Naive thymus-derived CD4-positive, alpha-beta T cell (primary cell): ENCODE measurements at regions of chr1 and their contacts with region 1.

Region 1: GRCh38 chr1:89605692-89606091 is 27.2 kb upstream of the LRRC8C start:
- DNase-seq: no peak
- ATAC-seq: no peak
- H3K4me3 ChIP-seq: peak overlapping the region; percentile 17
- H3K4me3 Mint-ChIP-seq: peak overlapping the region in 8 of 10 donors; percentile 52 to 96 (median 88)
- H3K27ac ChIP-seq: peak overlapping the region; percentile 92
- H3K27ac Mint-ChIP-seq: peak overlapping the region; percentile 97 to 100 (median 99)
- H3K4me1 ChIP-seq: peaks cover 82 to 85% of the 10 kb centered on the region in 2 donors
- H3K4me1 Mint-ChIP-seq: peaks cover 44 to 96% (median 93%) of the 10 kb centered on the region in 7 donors
- H3K27me3 ChIP-seq: no peaks in the 10 kb centered on the region
- H3K27me3 Mint-ChIP-seq: no peaks in the 10 kb centered on the region

Region 2: GRCh38 chr1:87636198-87636892 is 1969.3 kb before region 1 on chr1:
- CTCF ChIA-PET with region 1: no interaction called
- POLR2A ChIA-PET with region 1: no interaction called
- intact Hi-C with region 1: no loop called
- DNase-seq: no peak
- ATAC-seq: no peak
- H3K4me3 ChIP-seq: no peak overlapping the region
- H3K4me3 Mint-ChIP-seq: no peak overlapping the region
- H3K27ac ChIP-seq: no peak overlapping the region
- H3K27ac Mint-ChIP-seq: no peak overlapping the region
- H3K4me1 ChIP-seq: no peaks in the 10 kb centered on the region
- H3K4me1 Mint-ChIP-seq: no peaks in the 10 kb centered on the region
- H3K27me3 ChIP-seq: no peaks in the 10 kb centered on the region
- H3K27me3 Mint-ChIP-seq: peaks cover 0 to 12% (median 0%) of the 10 kb centered on the region in 5 donors

Region 3: DNA sequence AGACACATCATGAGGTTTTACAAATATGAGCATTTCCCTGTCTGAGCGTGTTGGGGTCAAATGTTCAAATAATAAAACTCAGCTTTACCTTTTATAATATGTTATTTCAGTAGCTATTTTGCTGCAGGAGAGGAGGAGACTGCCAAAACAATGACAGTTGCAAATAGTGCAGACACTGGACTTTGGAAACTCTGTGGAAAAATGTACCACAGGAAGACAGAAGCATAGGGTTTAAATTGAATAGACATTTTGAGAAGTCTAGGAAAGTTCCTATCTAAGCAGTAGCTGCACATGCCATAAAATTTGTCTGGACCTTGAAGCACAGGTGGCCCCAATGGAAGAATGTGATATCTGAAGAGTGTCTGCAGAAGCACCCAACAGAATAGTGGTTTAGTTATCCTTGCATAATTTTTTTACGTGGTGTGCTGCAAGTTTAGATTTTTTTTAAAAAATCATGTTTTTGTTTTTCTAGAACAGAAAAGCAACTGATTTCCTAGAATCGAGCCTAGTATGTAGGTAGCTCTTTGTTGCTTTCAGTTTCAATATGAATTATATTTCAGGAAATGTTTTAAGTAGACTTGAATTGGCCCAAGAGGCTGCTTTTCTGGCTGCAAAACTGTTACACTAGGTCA is 319.0 kb before region 1 on chr1:
- CTCF ChIA-PET with region 1: no interaction called
- POLR2A ChIA-PET with region 1: no interaction called
- intact Hi-C with region 1: loop called in 1 of 2 experiments (anchors 5 kb)
- DNase-seq: peak in 6 of 9 donors; percentile 25 to 65 (median 48)
- ATAC-seq: peak; percentile 77
- H3K4me3 ChIP-seq: peak overlapping the region; percentile 41
- H3K4me3 Mint-ChIP-seq: peak overlapping the region; percentile 63 to 83 (median 76)
- H3K27ac ChIP-seq: peak overlapping the region; percentile 63
- H3K27ac Mint-ChIP-seq: peak overlapping the region; percentile 76 to 96 (median 91)
- H3K4me1 ChIP-seq: peaks cover 40 to 52% of the 10 kb centered on the region in 2 donors
- H3K4me1 Mint-ChIP-seq: peaks cover 48 to 78% (median 74%) of the 10 kb centered on the region in 7 donors
- H3K27me3 ChIP-seq: no peaks in the 10 kb centered on the region
- H3K27me3 Mint-ChIP-seq: no peaks in the 10 kb centered on the region

Region 4: GRCh38 chr1:89545264-89546038 is 60.2 kb before region 1 on chr1:
- CTCF ChIA-PET with region 1: no interaction called
- POLR2A ChIA-PET with region 1: interaction called, 5 read pairs
- intact Hi-C with region 1: loop called in 1 of 2 experiments (anchors 2 kb)
- DNase-seq: peak in 3 of 9 donors; percentile 4 to 58 (median 49)
- ATAC-seq: peak; percentile 32
- H3K4me3 ChIP-seq: no peak overlapping the region
- H3K4me3 Mint-ChIP-seq: peak overlapping the region in 8 of 10 donors; percentile 3 to 68 (median 28)
- H3K27ac ChIP-seq: no peak overlapping the region
- H3K27ac Mint-ChIP-seq: peak overlapping the region in 4 of 9 donors; percentile 1 to 78 (median 32)
- H3K4me1 ChIP-seq: peaks cover 0 to 18% of the 10 kb centered on the region in 2 donors
- H3K4me1 Mint-ChIP-seq: peaks cover 37 to 87% (median 66%) of the 10 kb centered on the region in 7 donors
- H3K27me3 ChIP-seq: no peaks in the 10 kb centered on the region
- H3K27me3 Mint-ChIP-seq: no peaks in the 10 kb centered on the region

Region 5: GRCh38 chr1:89615676-89616598 is 10.2 kb after region 1 on chr1:
- CTCF ChIA-PET with region 1: interaction called, 13 read pairs
- POLR2A ChIA-PET with region 1: interaction called, 834 read pairs
- intact Hi-C with region 1: no loop called
- DNase-seq: no peak
- ATAC-seq: peak; percentile 54
- H3K4me3 ChIP-seq: no peak overlapping the region
- H3K4me3 Mint-ChIP-seq: peak overlapping the region in 2 of 10 donors; percentile 23 to 24
- H3K27ac ChIP-seq: no peak overlapping the region
- H3K27ac Mint-ChIP-seq: peak overlapping the region in 8 of 9 donors; percentile 15 to 86 (median 74)
- H3K4me1 ChIP-seq: peaks cover 30 to 42% of the 10 kb centered on the region in 2 donors
- H3K4me1 Mint-ChIP-seq: peaks cover 38 to 95% (median 84%) of the 10 kb centered on the region in 7 donors
- H3K27me3 ChIP-seq: no peaks in the 10 kb centered on the region
- H3K27me3 Mint-ChIP-seq: no peaks in the 10 kb centered on the region

Region 6: GRCh38 chr1:89657886-89658285 is 52.2 kb after region 1 on chr1:
- CTCF ChIA-PET with region 1: interaction called, 3 read pairs
- POLR2A ChIA-PET with region 1: interaction called, 25 read pairs
- intact Hi-C with region 1: no loop called
- DNase-seq: peak in 7 of 9 donors; percentile 46 to 80 (median 68)
- ATAC-seq: peak; percentile 86
- H3K4me3 ChIP-seq: peak overlapping the region; percentile 18
- H3K4me3 Mint-ChIP-seq: peak overlapping the region; percentile 36 to 78 (median 66)
- H3K27ac ChIP-seq: peak overlapping the region; percentile 50
- H3K27ac Mint-ChIP-seq: peak overlapping the region; percentile 79 to 91 (median 84)
- H3K4me1 ChIP-seq: peaks cover 65 to 94% of the 10 kb centered on the region in 2 donors
- H3K4me1 Mint-ChIP-seq: peaks cover 47 to 94% (median 89%) of the 10 kb centered on the region in 7 donors
- H3K27me3 ChIP-seq: no peaks in the 10 kb centered on the region
- H3K27me3 Mint-ChIP-seq: no peaks in the 10 kb centered on the region

Region 7: DNA sequence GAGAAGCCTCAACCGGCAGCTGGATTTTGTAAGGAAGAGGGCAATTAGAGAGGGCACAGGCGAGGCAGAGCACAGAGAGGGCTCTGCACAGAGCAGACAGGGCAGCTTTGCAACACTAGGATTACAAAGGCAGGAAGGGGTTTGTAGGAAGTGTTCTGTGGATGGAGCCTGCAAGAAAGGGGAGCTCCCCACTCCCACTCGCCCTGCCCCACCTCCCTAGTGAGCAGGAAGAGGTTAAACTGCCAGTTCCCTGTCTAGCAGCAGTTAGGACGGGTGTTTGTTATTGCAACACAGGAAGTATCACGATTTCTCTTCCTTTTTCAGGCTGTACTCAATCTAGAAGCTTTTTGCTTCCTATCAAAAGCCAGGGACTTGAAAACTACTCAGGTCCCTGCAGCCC is 151.8 kb after region 1 on chr1:
- CTCF ChIA-PET with region 1: interaction called, 34 read pairs
- POLR2A ChIA-PET with region 1: interaction called, 81 read pairs
- intact Hi-C with region 1: loop called in 1 of 2 experiments (anchors 2 kb)
- DNase-seq: peak in 8 of 9 donors; percentile 30 to 59 (median 51)
- ATAC-seq: peak; percentile 68
- H3K4me3 ChIP-seq: peak overlapping the region; percentile 48
- H3K4me3 Mint-ChIP-seq: peak overlapping the region; percentile 73 to 87 (median 83)
- H3K27ac ChIP-seq: peak overlapping the region; percentile 62
- H3K27ac Mint-ChIP-seq: peak overlapping the region; percentile 88 to 97 (median 95)
- H3K4me1 ChIP-seq: peaks cover 37 to 81% of the 10 kb centered on the region in 2 donors
- H3K4me1 Mint-ChIP-seq: peaks cover 61 to 97% (median 88%) of the 10 kb centered on the region in 7 donors
- H3K27me3 ChIP-seq: no peaks in the 10 kb centered on the region
- H3K27me3 Mint-ChIP-seq: no peaks in the 10 kb centered on the region

Region 8: DNA sequence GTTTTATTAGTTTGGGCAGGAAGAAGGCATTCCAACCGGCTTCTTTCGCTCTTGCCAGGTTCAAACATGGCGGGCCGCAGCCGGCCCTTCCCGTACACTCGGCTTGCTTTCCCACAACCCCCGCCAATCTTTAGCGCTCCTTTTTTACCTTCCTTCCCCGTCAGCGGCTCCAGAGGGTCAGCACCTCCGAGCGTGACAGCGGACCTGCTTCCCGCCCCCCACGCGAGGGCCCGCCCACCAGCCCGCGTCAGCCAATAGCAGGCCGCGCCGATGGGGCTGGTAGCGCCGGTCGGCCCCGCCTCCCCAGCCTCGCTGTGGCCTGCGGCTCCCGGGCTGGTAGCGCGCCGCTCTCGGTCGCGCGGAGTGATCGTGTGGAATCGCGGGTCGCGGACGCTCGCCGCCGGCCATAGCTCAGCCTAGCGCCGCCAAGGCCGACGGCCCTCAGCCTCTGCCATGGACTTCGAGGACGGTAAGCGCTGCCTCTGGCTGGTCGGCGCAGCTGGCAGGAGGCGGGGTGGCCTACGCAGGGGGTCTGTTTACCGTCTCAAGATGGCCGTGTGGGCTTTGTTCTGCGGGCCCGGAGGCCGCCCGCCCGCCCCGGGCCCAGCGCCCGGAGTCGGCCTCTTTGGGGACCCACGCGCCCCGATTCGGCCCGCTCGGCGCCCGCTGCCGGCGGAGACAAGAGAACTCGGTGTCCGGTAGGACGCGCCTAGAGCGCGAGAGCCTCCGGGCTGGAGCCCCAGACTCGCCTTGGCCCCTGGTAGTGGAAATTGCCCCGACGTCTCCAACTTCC is 389.3 kb after region 1 on chr1 and contains the start of gene ZNF326:
- CTCF ChIA-PET with region 1: no interaction called
- POLR2A ChIA-PET with region 1: no interaction called
- intact Hi-C with region 1: loop called in 1 of 2 experiments (anchors 5 kb)
- DNase-seq: peak; percentile 88 to 99 (median 93)
- ATAC-seq: peak; percentile 98
- H3K4me3 ChIP-seq: peak within 1 kb of the TSS; percentile 86
- H3K4me3 Mint-ChIP-seq: peak within 1 kb of the TSS; percentile 91 to 100 (median 99)
- H3K27ac ChIP-seq: peak within 1 kb of the TSS; percentile 85
- H3K27ac Mint-ChIP-seq: peak within 1 kb of the TSS; percentile 90 to 98 (median 96)
- H3K4me1 ChIP-seq: peaks cover 8 to 14% of the 10 kb centered on the region in 2 donors
- H3K4me1 Mint-ChIP-seq: peaks cover 28 to 47% (median 43%) of the 10 kb centered on the region in 7 donors
- H3K27me3 ChIP-seq: no peaks in the 10 kb centered on the region
- H3K27me3 Mint-ChIP-seq: peaks cover 0 to 7% (median 4%) of the 10 kb centered on the region in 5 donors
- total RNA-seq, gene ZNF326: 17.3 to 52.5 (median 23.5) TPM